ENCODE measurements at regions of chr1 and their contacts with region 1.

Region 1: DNA sequence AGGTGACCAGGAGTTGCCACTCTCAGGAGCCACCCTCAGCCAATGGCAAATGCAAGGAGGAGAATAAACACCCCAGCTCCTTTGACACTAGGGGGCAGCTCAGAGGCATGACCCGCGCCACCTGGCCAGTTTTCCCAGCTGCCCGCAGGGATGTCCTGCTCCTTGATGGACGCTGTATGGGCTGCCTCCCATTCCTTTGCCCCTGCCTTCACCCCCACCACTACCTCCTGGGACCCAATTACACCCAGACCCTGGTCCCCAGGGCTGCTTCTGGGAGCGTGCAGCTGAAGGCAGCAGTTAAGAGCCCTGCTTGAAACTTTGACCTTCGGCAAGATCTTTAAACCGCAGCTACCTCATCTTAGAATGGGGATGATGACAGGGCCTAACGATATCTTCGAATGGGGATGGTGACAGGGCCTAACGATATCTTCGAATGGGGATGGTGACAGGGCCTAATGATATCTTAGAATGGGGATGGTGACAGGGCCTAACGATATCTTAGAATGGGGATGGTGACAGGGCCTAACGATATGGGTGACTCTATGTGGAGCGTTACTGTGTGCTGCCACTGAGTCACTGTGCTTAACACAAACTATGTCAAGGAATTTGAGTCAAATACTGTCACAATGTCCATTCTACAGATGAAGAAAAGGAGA is 163.0 kb upstream of the KAZN start:
- DNase-seq: peak in 1 of 2 experiments; percentile 72
- H3K4me3 ChIP-seq: no peak overlapping the region
- H3K27ac ChIP-seq: no peak overlapping the region
- H3K4me1 ChIP-seq: no peaks in the 10 kb centered on the region
- H3K27me3 ChIP-seq: no peaks in the 10 kb centered on the region; a peak in 2 of 7 replicates
- CTCF ChIP-seq: peak; percentile 72 to 82 (median 77)
- EP300 ChIP-seq: no peak
- POLR2A ChIP-seq: no peak
- RAD21 ChIP-seq: peak; percentile 76 to 80

Region 2: DNA sequence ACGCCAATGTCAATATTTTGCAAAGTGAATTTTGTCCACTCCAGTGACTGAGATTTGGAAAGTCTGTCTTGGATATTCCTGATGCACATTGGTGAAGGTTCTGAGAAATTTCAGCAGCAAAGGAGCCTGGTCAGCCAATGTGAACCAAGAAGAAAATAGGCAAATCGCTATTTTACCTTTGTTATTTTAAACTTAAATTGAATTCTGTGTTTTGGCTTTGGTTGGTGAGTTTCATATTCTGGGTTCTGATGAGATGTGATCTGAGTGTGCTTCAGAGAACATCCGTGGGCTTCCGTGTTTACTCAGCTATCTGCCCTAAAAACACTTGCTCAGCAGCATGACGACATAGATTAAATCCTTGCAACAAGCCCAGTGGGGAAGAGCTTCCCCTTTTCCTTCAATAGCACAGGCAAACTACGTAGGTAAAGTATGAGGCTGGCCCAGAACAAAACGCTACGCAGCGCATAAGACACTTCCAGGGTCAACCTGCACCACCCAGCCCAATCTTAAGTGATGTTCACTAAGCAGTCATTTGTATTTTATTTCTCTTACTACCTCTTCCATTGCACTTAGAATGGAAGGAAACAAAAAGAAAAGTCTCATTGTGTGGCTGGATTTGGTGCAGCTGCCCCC is 13.4 kb before region 1 on chr1:
- CTCF ChIA-PET with region 1: interaction called, 26 read pairs
- POLR2A ChIA-PET with region 1: no interaction called
- DNase-seq: no peak
- H3K4me3 ChIP-seq: no peak overlapping the region
- H3K27ac ChIP-seq: no peak overlapping the region
- H3K4me1 ChIP-seq: no peaks in the 10 kb centered on the region
- H3K27me3 ChIP-seq: peaks cover 0 to 2% (median 0%) of the 10 kb centered on the region in 4 experiments; a peak in 1 of 7 replicates
- CTCF ChIP-seq: no peak
- EP300 ChIP-seq: no peak
- POLR2A ChIP-seq: no peak
- RAD21 ChIP-seq: no peak